ENCODE measurements at regions of chr18 and their contacts with region 1.

Region 1: GRCh38 chr18:61955644-61956043 is 62.8 kb upstream of the RNF152 start:
- DNase-seq: no peak
- H3K4me3 Mint-ChIP-seq: no peak overlapping the region
- H3K27ac Mint-ChIP-seq: no peak overlapping the region
- H3K4me1 Mint-ChIP-seq: peaks cover 31% of the 10 kb centered on the region
- H3K27me3 Mint-ChIP-seq: peaks cover 52% of the 10 kb centered on the region

Region 2: GRCh38 chr18:61765097-61765496 is 190.5 kb before region 1 on chr18:
- intact Hi-C with region 1: loop called (anchors 10 kb)
- DNase-seq: no peak
- H3K4me3 Mint-ChIP-seq: no peak overlapping the region
- H3K27ac Mint-ChIP-seq: no peak overlapping the region
- H3K4me1 Mint-ChIP-seq: peaks cover 9% of the 10 kb centered on the region
- H3K27me3 Mint-ChIP-seq: peaks cover 31% of the 10 kb centered on the region

Region 3: DNA sequence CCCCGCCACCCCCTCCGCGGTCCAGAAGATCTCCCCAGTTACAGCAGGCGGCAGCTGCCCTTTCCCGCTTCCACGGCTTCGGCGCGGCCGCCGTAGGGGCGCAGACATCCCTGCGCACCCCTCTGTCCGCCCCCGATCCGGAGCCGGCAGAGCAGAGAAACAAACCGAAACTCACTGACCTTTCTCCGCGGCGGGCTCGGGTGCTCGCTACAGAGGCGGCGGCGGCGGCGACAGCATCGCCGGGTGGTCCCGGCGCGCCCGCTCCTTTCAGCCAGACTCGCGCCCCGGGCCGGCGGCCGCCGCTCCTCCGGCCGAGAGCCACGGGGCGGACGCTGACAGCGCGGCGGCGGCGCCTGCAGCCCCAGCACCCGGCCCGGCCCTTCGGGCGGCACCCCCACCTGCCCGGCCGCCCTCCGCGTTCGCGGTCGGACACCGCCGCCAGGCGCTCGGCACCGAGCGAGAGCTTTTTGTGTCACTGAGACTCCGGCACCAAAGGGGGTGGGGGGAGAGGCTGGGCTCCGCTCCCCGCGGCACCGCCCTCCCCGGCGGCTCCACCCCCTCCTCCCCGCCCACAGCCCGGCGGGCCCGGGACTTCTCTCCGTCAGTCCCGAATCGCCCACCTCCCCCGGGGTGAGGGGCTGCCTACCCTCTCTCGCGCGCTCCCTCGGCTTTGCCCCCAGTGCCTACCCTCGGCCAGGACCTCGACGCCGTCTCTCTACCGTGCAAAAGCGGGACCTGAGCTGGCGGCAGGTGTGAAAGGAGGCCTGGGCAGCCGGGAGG is 61.5 kb before region 1 on chr18:
- intact Hi-C with region 1: loop called (anchors 1 kb)
- DNase-seq: peak; percentile 54
- H3K4me3 Mint-ChIP-seq: peak overlapping the region; percentile 79
- H3K27ac Mint-ChIP-seq: no peak overlapping the region
- H3K4me1 Mint-ChIP-seq: peaks cover 8% of the 10 kb centered on the region
- H3K27me3 Mint-ChIP-seq: peaks cover 74% of the 10 kb centered on the region

Region 4: DNA sequence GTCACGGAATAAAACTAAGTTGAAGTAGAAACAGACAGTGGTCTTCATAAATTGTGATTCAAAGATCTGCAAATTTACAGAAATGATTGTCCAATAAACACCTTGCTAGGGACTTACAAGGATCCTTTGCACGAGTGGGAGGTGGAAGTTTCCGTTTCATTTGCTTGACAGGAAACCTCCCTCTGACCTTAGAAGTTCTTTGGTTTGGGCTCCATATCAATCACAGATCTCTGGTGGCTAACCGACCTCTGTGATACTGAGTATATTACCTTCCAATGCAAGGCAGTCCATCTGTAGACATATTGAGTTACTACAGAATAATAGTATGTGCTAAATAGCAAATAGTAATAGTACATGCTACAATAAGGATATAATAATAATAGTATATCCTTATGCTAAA is 29.1 kb before region 1 on chr18:
- intact Hi-C with region 1: loop called (anchors 1 kb)
- DNase-seq: peak; percentile 37
- H3K4me3 Mint-ChIP-seq: no peak overlapping the region
- H3K27ac Mint-ChIP-seq: peak overlapping the region; percentile 85
- H3K4me1 Mint-ChIP-seq: peaks cover 41% of the 10 kb centered on the region
- H3K27me3 Mint-ChIP-seq: peaks cover 27% of the 10 kb centered on the region

Region 5: GRCh38 chr18:61975526-61976326 is 20.1 kb after region 1 on chr18:
- intact Hi-C with region 1: loop called (anchors 2 kb)
- DNase-seq: peak; percentile 31
- H3K4me3 Mint-ChIP-seq: no peak overlapping the region
- H3K27ac Mint-ChIP-seq: no peak overlapping the region
- H3K4me1 Mint-ChIP-seq: peaks cover 28% of the 10 kb centered on the region
- H3K27me3 Mint-ChIP-seq: peaks cover 4% of the 10 kb centered on the region

Region 6: DNA sequence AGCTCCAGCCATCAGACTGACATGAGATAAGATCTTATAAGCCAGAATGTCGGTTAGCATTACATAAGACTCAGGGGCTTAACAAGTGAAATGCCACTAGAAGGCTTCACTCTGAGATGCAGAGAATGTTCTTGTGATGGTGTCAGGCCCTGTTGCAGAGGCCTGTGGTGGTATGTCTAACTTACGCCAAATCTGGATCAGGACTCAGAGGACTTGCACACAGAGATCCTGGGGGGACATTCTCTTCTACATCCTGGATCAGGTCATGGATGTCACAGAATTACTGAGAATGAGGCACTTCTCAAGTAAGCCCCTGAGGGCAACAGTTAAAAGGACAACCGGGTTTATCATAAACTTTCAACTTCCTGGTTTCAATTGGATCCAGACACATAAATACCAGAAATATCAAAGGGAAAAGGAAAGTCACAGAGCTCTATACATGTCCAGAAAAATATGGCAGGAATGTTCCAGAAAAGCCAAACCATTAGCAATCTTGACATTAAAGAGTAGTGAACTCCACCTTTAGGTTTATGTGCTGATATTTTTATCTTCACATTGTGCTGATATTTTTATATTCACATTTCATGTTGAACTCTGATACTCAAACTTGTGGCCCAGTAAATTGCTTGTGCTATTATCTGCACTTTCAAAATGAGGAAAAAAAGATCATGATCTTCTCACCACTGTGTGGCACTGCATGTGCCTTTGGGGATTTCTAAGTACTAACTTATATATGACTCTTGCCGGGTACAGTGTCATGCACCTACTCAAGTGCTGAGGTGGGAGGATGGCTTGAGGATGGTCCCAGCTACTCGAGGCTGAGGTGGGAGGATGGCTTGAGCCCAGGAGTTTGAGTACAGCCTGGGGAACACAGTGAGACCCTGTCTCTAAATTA is 74.7 kb after region 1 on chr18:
- intact Hi-C with region 1: loop called (anchors 2 kb)
- DNase-seq: no peak
- H3K4me3 Mint-ChIP-seq: no peak overlapping the region
- H3K27ac Mint-ChIP-seq: no peak overlapping the region
- H3K4me1 Mint-ChIP-seq: peaks cover 37% of the 10 kb centered on the region
- H3K27me3 Mint-ChIP-seq: peaks cover 33% of the 10 kb centered on the region

Region 7: DNA sequence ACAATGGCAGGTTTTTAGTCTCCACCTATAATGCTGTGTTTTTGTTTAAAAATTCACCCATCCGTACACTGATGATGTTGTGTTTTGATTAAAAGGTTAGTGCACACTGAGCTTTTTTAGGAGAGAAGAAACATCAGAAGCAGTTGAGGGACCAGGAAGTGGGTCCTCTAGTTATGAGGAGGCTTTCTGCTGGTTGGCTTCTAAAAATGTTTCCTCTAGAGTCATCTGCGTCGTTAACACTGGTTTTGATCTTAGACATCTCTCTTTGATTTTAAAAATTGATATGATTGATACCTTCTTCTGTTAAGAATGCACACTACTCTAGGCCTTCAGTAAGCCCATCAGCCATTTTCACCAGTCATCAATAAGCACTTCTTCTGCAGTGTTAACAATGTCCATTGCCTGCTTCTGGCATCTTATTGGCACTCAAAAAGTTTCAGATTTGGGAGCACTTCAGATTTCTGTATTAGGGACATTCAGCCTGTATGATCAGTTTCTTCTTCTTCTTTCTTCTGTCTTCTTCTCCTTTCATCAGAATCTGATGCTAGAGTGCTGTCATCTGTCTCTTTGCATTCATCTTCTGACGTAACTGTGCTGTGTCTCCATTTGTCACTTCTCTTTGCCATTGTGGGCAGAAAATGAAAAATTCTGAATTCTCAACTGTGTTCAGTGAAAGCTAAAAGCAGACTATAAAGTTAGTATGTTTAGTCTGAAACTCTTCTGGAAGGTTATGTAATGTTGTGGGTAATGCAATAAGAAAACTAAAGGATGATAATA is 816.0 kb after region 1 on chr18:
- intact Hi-C with region 1: loop called (anchors 10 kb)
- DNase-seq: no peak
- H3K4me3 Mint-ChIP-seq: peak overlapping the region; percentile 24
- H3K27ac Mint-ChIP-seq: peak overlapping the region; percentile 87
- H3K4me1 Mint-ChIP-seq: peaks cover 58% of the 10 kb centered on the region
- H3K27me3 Mint-ChIP-seq: no peaks in the 10 kb centered on the region